PC-9 (cell line): ENCODE measurements at regions of chr1 and their contacts with region 1.

Region 1: DNA sequence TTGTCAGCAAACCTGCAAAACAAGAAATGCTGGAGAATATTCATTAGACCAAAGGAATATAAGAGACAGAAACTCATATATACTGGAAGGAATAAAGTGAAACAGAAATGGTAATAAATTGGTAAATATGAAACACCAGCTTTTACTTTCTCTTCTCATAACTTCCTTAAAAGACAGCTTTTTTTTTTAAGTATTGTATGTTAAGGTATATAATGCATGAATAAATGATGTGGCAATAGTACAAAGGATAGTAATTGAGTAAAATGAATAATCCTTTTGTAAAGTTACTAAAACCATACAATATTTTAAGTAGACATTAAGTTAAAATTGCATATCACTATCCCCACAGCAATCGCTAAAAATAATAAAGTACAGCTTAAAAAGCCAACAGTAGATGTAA is 64.8 kb downstream of the TRIM33 start:
- DNase-seq: no peak
- H3K4me3 ChIP-seq: no peak overlapping the region
- H3K27ac ChIP-seq: no peak overlapping the region
- H3K4me1 ChIP-seq: no peaks in the 10 kb centered on the region
- H3K27me3 ChIP-seq: no peaks in the 10 kb centered on the region
- CTCF ChIP-seq: no peak

Region 2: GRCh38 chr1:114558544-114558943 is 112.3 kb after region 1 on chr1:
- CTCF ChIA-PET with region 1: no interaction called
- POLR2A ChIA-PET with region 1: no interaction called
- intact Hi-C with region 1: loop called (anchors 10 kb)
- DNase-seq: no peak
- H3K4me3 ChIP-seq: no peak overlapping the region
- H3K27ac ChIP-seq: no peak overlapping the region
- H3K4me1 ChIP-seq: no peaks in the 10 kb centered on the region
- H3K27me3 ChIP-seq: no peaks in the 10 kb centered on the region
- CTCF ChIP-seq: peak; percentile 69